ENCODE measurements at regions of chr10 and their contacts with region 1.

Region 1: DNA sequence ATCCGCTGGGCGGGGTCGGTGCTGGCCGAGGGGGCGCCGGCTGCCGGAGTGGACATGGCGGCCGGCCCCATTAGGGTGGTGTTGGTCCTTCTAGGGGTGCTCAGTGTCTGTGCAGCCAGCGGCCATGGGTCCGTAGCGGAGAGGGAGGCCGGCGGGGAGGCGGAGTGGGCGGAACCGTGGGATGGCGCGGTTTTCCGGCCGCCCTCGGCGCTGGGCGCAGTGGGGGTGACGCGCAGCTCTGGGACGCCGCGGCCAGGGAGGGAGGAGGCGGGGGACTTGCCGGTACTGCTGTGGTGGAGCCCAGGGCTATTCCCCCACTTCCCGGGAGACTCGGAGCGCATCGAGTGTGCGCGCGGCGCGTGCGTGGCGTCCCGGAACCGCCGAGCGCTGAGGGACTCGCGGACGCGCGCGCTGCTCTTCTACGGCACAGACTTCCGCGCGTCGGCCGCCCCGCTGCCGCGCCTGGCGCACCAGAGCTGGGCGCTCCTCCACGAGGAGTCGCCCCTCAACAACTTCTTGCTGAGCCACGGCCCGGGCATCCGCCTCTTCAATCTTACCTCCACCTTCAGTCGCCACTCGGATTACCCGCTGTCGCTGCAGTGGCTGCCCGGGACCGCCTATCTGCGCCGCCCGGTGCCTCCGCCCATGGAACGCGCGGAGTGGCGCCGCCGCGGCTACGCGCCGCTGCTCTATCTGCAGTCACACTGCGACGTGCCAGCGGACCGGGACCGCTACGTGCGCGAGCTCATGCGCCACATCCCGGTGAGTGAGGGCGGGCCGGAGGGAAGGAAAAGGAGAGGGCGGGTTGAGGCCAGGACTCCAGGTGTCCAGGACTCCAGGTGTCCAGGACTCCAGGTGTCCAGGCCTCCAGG is 9.3 kb upstream of the CHCHD1 start:
- DNase-seq: peak; percentile 80
- ATAC-seq: peak; percentile 67
- H3K4me3 Mint-ChIP-seq: peak overlapping the region; percentile 91
- H3K27ac Mint-ChIP-seq: peak overlapping the region; percentile 91
- H3K4me1 Mint-ChIP-seq: peaks cover 64% of the 10 kb centered on the region
- H3K27me3 Mint-ChIP-seq: no peaks in the 10 kb centered on the region
- CTCF ChIP-seq: no peak

Region 2: GRCh38 chr10:73743905-73744663 is 28.4 kb before region 1 on chr10 and contains the start of gene SEC24C:
- CTCF ChIA-PET with region 1: interaction called, 5 read pairs
- POLR2A ChIA-PET with region 1: interaction called, 43 read pairs
- intact Hi-C with region 1: loop called (anchors 1 kb)
- DNase-seq: peak; percentile 86
- ATAC-seq: peak; percentile 95
- H3K4me3 Mint-ChIP-seq: peak within 1 kb of the TSS; percentile 100
- H3K27ac Mint-ChIP-seq: peak within 1 kb of the TSS; percentile 100
- H3K4me1 Mint-ChIP-seq: peaks cover 41% of the 10 kb centered on the region
- H3K27me3 Mint-ChIP-seq: no peaks in the 10 kb centered on the region
- CTCF ChIP-seq: no peak
- total RNA-seq, gene SEC24C: 78.5 and 89.8 TPM in 2 replicates

Region 3: DNA sequence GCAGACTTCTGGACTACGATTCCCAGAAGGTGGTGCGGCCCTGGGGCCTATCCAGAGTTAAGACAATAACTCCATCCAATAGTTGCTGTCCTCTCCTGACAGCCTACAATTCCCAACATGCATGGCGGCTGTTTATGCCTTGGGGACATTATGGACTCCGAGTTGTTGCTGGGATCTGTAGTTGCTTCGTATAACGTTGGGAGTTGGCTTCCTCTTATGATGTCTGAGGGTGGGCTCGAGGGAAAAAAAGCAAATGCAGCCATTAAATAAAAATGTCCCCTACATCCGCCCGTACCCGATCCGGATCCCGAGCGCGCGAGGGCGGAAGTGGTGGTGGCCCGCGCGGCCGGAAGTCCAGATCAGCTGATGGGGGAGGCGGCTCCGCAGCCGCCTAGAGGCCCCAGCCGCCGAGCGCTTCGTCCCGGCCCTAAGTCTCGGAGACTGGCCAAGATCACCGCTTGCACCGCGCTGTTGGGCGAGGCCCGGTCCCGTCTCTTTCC is 12.8 kb after region 1 on chr10 and contains the start of gene ZSWIM8:
- CTCF ChIA-PET with region 1: interaction called, 5 read pairs
- POLR2A ChIA-PET with region 1: interaction called, 77 read pairs
- intact Hi-C with region 1: loop called (anchors 1 kb)
- DNase-seq: peak; percentile 78
- ATAC-seq: peak; percentile 88
- H3K4me3 Mint-ChIP-seq: peak within 1 kb of the TSS; percentile 99
- H3K27ac Mint-ChIP-seq: peak within 1 kb of the TSS; percentile 98
- H3K4me1 Mint-ChIP-seq: peaks cover 57% of the 10 kb centered on the region
- H3K27me3 Mint-ChIP-seq: no peaks in the 10 kb centered on the region
- CTCF ChIP-seq: no peak
- total RNA-seq, gene ZSWIM8: 67.5 and 93.0 TPM in 2 replicates

Region 4: DNA sequence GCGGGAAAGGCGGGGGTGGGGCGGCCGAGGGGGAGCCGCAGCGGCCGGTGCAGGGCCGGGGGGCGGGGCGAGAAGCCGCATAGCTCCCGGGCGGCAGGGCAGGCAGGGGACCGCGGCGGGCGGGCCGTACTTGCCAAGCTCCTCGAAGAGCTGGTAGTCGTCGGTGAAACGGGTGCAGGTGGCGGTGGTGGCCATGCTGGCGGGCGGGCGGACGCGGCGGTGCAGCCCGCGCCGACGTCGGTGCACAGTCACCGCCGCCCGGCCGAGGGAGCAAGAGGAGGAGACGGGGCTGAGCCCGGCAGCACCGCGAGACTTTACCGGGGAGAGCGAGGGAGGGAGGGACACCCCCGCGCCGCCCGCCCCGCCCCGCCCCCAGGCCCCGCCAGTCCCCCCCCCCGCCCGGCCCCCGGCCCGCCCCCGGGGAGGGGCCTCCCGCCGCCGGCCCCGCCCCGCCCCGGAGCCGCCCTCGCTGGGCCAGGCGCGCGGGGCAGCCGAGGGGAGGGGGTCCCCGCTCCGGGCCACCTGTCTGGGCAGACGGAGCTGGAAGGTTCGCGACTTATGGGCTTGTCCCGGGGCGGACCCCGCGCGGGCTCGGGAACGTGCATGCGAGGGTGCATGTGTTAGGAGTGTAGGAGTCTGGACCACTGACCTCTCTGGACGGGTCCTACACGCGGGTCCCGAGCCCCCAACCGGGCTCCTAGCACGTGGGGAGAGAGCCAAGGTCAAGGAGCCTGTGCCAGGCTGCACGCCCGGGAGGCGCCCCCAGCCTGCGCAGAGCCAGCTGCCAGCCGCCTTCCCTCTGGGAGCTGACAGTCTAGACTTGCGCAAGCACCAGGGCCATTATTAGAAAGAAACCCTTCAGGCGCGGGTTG is 102.0 kb after region 1 on chr10 and contains the start of gene CAMK2G:
- CTCF ChIA-PET with region 1: interaction called, 19 read pairs
- POLR2A ChIA-PET with region 1: interaction called, 10 read pairs
- intact Hi-C with region 1: loop called (anchors 1 kb)
- DNase-seq: peak; percentile 74
- ATAC-seq: peak; percentile 90
- H3K4me3 Mint-ChIP-seq: peak within 1 kb of the TSS; percentile 95
- H3K27ac Mint-ChIP-seq: peak within 1 kb of the TSS; percentile 90
- H3K4me1 Mint-ChIP-seq: peaks cover 37% of the 10 kb centered on the region
- H3K27me3 Mint-ChIP-seq: no peaks in the 10 kb centered on the region
- CTCF ChIP-seq: no peak
- total RNA-seq, gene CAMK2G: 17.8 and 19.9 TPM in 2 replicates

Measured in activated B cell treated with CpG ODN at 0.5 μM for 24 hours (primary cell).